Caco-2 (cell line): ENCODE measurements at regions of chr4 and their contacts with region 1.

Region 1: DNA sequence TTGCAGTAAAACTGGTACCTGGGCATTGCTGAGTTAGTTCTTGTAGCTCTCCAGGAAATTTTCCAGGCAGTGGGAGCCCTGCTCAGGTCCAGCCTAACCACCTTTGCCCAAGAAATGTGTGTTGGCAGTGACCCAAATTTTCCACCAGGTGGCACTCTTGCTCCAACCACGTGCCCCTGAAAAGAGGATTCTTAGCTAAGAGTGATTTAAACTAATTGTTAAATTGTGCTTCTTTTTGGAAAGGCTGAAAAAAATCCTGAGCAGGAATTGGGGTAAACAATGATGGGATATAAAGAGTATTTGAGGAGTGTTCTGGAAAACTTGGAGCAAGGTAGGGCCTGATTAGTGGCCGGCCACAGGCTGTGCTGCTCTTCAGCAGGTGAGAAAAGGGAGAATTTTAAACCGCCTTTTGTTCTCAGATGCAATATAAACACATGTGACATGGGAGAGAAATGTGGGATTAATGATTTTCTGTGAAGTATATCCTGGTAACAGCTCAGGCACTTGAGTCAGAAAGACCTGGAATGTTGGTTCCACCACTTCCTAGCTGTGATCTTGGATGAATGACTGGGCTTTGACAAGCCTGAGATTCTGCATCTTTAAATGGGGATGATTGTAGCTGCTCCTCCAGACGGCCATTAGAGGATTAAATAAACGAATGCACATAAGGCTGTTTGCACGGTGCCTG is 219.6 kb downstream of the PTTG2 start:
- DNase-seq: peak; percentile 67 to 74
- H3K4me3 ChIP-seq: no peak overlapping the region
- H3K4me3 Mint-ChIP-seq: no peak overlapping the region
- H3K27ac Mint-ChIP-seq: peak overlapping the region; percentile 65
- H3K4me1 ChIP-seq: 0 out of 2 replicates have a peak, but pooled peaks cover 3% of the 10 kb centered on the region
- H3K4me1 Mint-ChIP-seq: peaks cover 7% of the 10 kb centered on the region
- H3K27me3 ChIP-seq: no peaks in the 10 kb centered on the region
- H3K27me3 Mint-ChIP-seq: no peaks in the 10 kb centered on the region
- CTCF ChIP-seq: peak; percentile 76 to 91

Region 2: GRCh38 chr4:38069271-38069760 is 110.5 kb before region 1 on chr4:
- CTCF ChIA-PET with region 1: interaction called, 12 read pairs
- POLR2A ChIA-PET with region 1: no interaction called
- intact Hi-C with region 1: no loop called
- DNase-seq: peak; percentile 50 to 56
- H3K4me3 ChIP-seq: no peak overlapping the region
- H3K4me3 Mint-ChIP-seq: no peak overlapping the region
- H3K27ac Mint-ChIP-seq: peak overlapping the region; percentile 23
- H3K4me1 ChIP-seq: peaks cover 5% of the 10 kb centered on the region
- H3K4me1 Mint-ChIP-seq: no peaks in the 10 kb centered on the region
- H3K27me3 ChIP-seq: no peaks in the 10 kb centered on the region
- H3K27me3 Mint-ChIP-seq: no peaks in the 10 kb centered on the region
- CTCF ChIP-seq: peak; percentile 37 to 72

Region 3: GRCh38 chr4:38162240-38162784 is 17.5 kb before region 1 on chr4:
- CTCF ChIA-PET with region 1: no interaction called
- POLR2A ChIA-PET with region 1: no interaction called
- intact Hi-C with region 1: no loop called
- DNase-seq: no peak
- H3K4me3 ChIP-seq: no peak overlapping the region
- H3K4me3 Mint-ChIP-seq: no peak overlapping the region
- H3K27ac Mint-ChIP-seq: no peak overlapping the region
- H3K4me1 ChIP-seq: no peaks in the 10 kb centered on the region
- H3K4me1 Mint-ChIP-seq: peaks cover 11% of the 10 kb centered on the region
- H3K27me3 ChIP-seq: no peaks in the 10 kb centered on the region
- H3K27me3 Mint-ChIP-seq: no peaks in the 10 kb centered on the region
- CTCF ChIP-seq: no peak

Region 4: DNA sequence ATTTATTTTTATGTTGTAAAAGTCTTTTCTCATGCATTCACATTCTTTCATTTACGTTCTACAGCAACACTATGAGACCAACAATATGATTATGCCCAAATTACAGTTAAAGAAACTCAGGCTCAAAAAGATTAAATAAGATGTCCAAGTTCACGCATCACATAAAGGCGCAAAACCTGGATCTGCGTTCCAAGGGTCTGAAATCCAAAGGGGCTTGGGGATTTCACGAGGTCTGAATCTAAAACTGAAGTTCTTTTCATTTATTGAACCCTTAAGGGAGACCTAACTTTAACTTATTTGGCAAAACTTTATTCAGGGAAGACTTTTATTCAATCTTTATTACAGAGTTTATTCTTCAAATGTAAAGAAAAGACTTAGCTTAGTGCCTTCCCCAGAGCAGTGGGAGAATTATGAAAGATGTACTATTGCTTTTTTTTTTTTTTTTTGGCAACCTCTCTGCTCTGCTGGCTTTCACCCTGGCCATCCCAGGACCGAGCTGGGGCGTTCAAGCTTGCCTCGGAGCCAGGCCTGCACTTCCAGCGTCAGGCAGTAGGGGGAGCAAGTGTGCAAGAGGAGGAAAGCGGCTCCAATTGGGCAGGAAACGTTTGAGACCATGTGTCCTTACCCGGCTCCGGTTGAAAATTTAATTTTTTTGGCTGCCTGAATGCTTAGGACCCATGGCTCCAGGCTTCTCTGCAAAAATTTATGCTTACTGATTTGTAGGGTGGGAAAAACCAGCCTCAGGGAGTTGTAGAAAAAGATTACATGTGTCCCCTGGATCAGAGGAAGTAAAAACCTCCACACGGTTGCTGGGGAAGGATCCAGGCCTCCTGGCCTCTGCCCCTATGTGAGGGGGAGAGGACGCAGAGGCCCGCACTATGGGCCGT is 139.9 kb after region 1 on chr4:
- CTCF ChIA-PET with region 1: interaction called, 10 read pairs
- POLR2A ChIA-PET with region 1: no interaction called
- intact Hi-C with region 1: loop called (anchors 2 kb)
- DNase-seq: peak; percentile 83 to 89
- H3K4me3 ChIP-seq: no peak overlapping the region
- H3K4me3 Mint-ChIP-seq: peak overlapping the region; percentile 64
- H3K27ac Mint-ChIP-seq: no peak overlapping the region
- H3K4me1 ChIP-seq: peaks cover 17% of the 10 kb centered on the region
- H3K4me1 Mint-ChIP-seq: no peaks in the 10 kb centered on the region
- H3K27me3 ChIP-seq: no peaks in the 10 kb centered on the region
- H3K27me3 Mint-ChIP-seq: no peaks in the 10 kb centered on the region
- CTCF ChIP-seq: peak; percentile 91 to 92

Region 5: GRCh38 chr4:38730830-38731646 is 551.2 kb after region 1 on chr4:
- CTCF ChIA-PET with region 1: interaction called, 4 read pairs
- POLR2A ChIA-PET with region 1: no interaction called
- intact Hi-C with region 1: loop called (anchors 1 kb)
- DNase-seq: peak; percentile 67 to 80
- H3K4me3 ChIP-seq: no peak overlapping the region
- H3K4me3 Mint-ChIP-seq: no peak overlapping the region
- H3K27ac Mint-ChIP-seq: no peak overlapping the region
- H3K4me1 ChIP-seq: no peaks in the 10 kb centered on the region
- H3K4me1 Mint-ChIP-seq: no peaks in the 10 kb centered on the region
- H3K27me3 ChIP-seq: no peaks in the 10 kb centered on the region
- H3K27me3 Mint-ChIP-seq: no peaks in the 10 kb centered on the region
- CTCF ChIP-seq: peak; percentile 75 to 88

Region 6: DNA sequence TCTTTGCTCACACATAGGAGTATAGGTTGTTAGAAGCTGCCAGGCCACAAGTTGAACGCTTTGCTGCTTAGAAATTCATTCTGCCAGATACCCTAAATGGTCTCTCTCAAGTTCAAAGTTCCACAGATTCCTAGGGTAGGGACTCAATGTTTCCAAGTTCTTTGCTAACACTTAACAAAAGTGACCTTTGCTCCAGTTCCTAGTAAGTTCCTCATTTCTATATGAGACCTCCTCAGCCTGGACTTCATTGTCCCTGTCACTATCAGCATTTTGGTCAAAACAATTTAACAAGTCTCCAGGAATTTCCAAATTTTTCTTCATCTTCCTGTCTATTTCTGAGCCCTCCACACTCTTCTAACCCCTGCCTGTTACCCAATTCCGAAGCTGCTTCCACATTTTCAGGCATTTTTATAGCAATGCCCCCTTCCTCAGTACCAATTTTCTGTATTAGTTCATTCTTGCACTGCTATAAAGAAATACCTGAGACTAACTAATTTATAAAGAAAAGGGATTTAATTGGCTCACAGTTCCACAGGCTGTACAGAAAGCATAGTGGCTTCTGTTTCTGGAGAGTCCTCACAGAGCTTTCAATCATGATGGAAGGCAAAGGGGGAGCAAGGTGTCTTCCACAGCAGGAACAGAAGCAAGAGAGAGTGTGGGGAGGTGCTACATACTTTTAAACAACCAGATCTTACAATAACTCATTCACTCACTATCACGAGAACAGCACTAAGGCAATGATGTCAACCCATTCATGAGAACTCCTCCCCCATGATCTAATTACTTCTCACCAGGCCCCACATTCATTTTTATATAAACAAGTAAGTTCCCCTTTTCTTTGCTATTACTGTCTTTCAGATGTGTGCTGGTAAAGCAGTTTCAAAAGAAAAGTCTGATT is 636.3 kb after region 1 on chr4:
- CTCF ChIA-PET with region 1: no interaction called
- POLR2A ChIA-PET with region 1: no interaction called
- intact Hi-C with region 1: no loop called
- DNase-seq: no peak
- H3K4me3 ChIP-seq: no peak overlapping the region
- H3K4me3 Mint-ChIP-seq: no peak overlapping the region
- H3K27ac Mint-ChIP-seq: no peak overlapping the region
- H3K4me1 ChIP-seq: no peaks in the 10 kb centered on the region
- H3K4me1 Mint-ChIP-seq: no peaks in the 10 kb centered on the region
- H3K27me3 ChIP-seq: no peaks in the 10 kb centered on the region
- H3K27me3 Mint-ChIP-seq: peaks cover 3% of the 10 kb centered on the region
- CTCF ChIP-seq: no peak